PC-9 (cell line): ENCODE measurements at regions of chr15 and their contacts with region 1.

Region 1: DNA sequence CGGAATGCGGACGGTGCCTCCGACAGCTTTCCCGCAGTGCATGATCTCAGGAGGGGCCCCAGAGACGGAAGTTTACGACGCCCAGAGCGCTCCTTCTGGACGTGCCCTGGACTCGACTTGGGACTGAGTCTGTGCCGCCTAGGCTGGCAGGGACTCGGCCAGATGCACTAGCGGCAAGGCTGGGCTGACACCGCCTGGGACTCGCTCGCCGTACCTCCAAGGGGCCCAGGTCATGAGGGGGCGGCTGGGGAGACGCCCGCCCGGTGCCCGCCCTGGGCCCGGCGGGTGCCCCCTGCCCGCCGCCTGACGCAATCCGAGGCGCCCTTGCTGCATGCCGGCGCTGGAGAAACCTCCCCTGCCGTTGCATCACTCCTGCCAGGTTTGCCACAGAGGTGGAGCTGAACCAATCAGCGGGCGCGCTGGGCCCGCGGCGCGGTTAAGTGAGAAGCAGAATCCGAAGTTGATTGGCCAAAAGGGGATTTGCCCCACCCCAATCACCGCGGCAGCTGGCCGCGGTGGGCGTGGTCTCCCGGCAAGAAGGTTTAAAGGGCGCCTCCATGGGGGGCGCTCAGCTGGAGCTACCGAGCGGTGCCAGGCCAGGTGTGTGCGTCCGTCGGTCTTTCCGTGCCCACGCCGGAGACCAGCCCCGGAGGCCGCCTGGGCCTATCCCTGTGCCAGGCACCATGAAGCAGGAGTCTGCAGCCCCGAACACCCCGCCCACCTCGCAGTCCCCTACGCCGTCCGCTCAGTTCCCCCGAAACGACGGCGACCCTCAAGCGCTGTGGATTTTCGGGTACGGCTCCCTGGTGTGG is at the start of gene CHAC1:
- DNase-seq: peak; percentile 86 to 94
- H3K4me3 ChIP-seq: peak within 1 kb of the TSS; percentile 83
- H3K27ac ChIP-seq: peak within 1 kb of the TSS; percentile 98
- H3K4me1 ChIP-seq: peaks cover 13% of the 10 kb centered on the region
- H3K27me3 ChIP-seq: no peaks in the 10 kb centered on the region
- CTCF ChIP-seq: no peak
- total RNA-seq, gene CHAC1: 5.3 and 8.6 TPM in 2 replicates

Region 2: GRCh38 chr15:40525855-40526254 is 427.3 kb before region 1 on chr15:
- CTCF ChIA-PET with region 1: no interaction called
- POLR2A ChIA-PET with region 1: interaction called, 12 read pairs
- intact Hi-C with region 1: no loop called
- DNase-seq: no peak
- H3K4me3 ChIP-seq: no peak overlapping the region
- H3K27ac ChIP-seq: no peak overlapping the region
- H3K4me1 ChIP-seq: no peaks in the 10 kb centered on the region
- H3K27me3 ChIP-seq: no peaks in the 10 kb centered on the region
- CTCF ChIP-seq: no peak

Region 3: DNA sequence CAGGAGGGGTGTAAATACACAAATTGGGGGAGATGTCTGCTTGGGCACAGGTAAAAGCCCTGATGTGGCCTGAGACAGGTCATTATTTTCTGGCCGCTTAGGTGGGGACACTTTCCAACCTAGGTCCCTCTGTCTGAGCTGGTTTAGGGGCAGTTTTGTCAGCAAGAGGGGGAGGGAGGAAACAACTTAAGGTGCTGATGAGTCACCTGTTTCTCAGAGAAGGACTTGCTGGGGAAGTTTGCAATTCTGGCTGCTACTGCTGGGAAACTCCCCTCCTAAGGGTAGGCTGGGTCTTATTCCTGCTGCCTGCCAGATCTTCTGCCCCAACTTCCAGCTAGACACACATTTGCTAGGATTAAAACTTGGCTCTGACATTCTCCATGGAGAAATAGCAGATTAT is 74.3 kb before region 1 on chr15:
- CTCF ChIA-PET with region 1: no interaction called
- POLR2A ChIA-PET with region 1: no interaction called
- intact Hi-C with region 1: no loop called
- DNase-seq: peak; percentile 65 to 85
- H3K4me3 ChIP-seq: no peak overlapping the region; the same call in 1 of the 2 replicates
- H3K27ac ChIP-seq: peak overlapping the region; percentile 82
- H3K4me1 ChIP-seq: peaks cover 37% of the 10 kb centered on the region
- H3K27me3 ChIP-seq: no peaks in the 10 kb centered on the region
- CTCF ChIP-seq: no peak

Region 4: GRCh38 chr15:40941528-40942336 is 11.4 kb before region 1 on chr15:
- CTCF ChIA-PET with region 1: interaction called, 14 read pairs
- POLR2A ChIA-PET with region 1: no interaction called
- intact Hi-C with region 1: no loop called
- DNase-seq: peak; percentile 55 to 82
- H3K4me3 ChIP-seq: peak overlapping the region; percentile 64; the same call in 1 of the 2 replicates
- H3K27ac ChIP-seq: peak overlapping the region; percentile 32; the same call in 1 of the 2 replicates
- H3K4me1 ChIP-seq: 0 out of 2 replicates have a peak, but pooled peaks cover 6% of the 10 kb centered on the region
- H3K27me3 ChIP-seq: no peaks in the 10 kb centered on the region
- CTCF ChIP-seq: peak; percentile 36; the same call in 1 of the 2 replicates

Region 5: GRCh38 chr15:40974879-40975278 is 21.8 kb after region 1 on chr15:
- CTCF ChIA-PET with region 1: no interaction called
- POLR2A ChIA-PET with region 1: interaction called, 9 read pairs
- intact Hi-C with region 1: loop called (anchors 2 kb)
- DNase-seq: no peak
- H3K4me3 ChIP-seq: no peak overlapping the region
- H3K27ac ChIP-seq: no peak overlapping the region
- H3K4me1 ChIP-seq: no peaks in the 10 kb centered on the region
- H3K27me3 ChIP-seq: no peaks in the 10 kb centered on the region
- CTCF ChIP-seq: no peak

Region 6: DNA sequence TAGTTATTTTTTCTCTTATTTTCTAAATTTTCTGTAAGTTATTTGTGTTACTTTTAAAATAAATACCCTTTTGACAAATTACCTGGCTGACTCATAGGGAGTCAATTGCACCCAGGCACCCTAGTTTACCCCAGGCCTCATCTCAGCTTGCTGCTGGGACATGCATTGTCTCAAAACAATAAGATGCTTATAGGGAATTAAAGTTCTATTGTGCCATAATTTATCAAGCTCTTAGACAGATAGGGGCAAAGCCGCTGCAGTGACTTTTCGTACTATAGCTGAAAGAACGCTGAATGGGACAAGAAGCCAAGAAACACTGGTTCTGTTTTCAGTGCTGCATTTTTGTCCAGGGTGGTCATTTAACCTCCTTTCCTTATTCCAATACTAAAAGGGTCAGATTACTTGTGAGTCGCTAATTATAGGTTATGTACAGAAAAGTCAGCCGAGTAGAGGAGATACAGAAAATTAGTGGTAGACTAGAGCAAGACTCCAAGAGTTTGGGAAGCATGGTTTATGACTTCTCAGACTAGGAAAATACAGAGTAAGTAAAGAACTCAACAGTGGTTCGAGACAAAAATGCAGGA is 227.2 kb after region 1 on chr15:
- CTCF ChIA-PET with region 1: no interaction called
- POLR2A ChIA-PET with region 1: interaction called, 14 read pairs
- intact Hi-C with region 1: no loop called
- DNase-seq: no peak
- H3K4me3 ChIP-seq: no peak overlapping the region
- H3K27ac ChIP-seq: no peak overlapping the region
- H3K4me1 ChIP-seq: peaks cover 9% of the 10 kb centered on the region
- H3K27me3 ChIP-seq: no peaks in the 10 kb centered on the region
- CTCF ChIP-seq: no peak